ENCODE measurements at regions of chr6 and their contacts with region 1.

Region 1: DNA sequence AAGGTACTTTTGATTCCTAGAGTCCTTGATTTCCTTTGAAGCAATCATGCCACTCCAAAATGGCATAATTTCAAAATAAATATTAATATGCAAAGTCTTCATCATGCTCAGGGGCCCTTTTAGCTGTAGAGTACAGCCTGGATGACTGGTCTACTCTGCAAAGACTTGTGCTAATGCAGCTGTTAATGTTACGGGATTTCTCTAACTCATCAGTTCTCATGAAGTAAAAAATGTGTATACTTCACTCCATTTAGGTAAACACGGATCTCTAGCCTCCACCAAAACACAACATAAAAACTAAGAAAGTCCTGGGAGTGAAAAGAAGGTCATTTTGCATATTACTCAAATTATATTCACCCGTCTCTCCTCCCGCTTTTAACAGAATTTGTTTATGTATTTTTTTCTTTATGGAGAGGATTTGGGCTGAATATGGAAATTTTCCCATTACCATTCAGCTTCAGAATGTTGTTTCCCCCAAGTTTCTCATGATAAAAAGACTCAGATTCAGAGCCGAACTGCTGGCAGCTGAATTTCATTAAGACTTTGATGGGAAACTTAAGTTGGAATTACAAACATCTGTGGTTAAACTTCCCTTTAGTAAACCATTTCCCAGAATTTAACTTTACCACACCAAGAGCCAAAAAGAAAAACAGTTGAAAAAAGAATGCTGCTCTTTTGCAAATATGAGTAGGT is 8.7 kb downstream of the LAMA4 start:
- DNase-seq: no peak
- ATAC-seq: no peak
- H3K4me3 Mint-ChIP-seq: no peak overlapping the region
- H3K27ac Mint-ChIP-seq: no peak overlapping the region
- H3K4me1 Mint-ChIP-seq: no peaks in the 10 kb centered on the region
- H3K27me3 Mint-ChIP-seq: peaks cover 11% of the 10 kb centered on the region
- CTCF ChIP-seq: no peak

Region 2: GRCh38 chr6:112198582-112198981 is 47.1 kb before region 1 on chr6:
- CTCF ChIA-PET with region 1: no interaction called
- POLR2A ChIA-PET with region 1: no interaction called
- intact Hi-C with region 1: loop called (anchors 1 kb)
- DNase-seq: no peak
- ATAC-seq: no peak
- H3K4me3 Mint-ChIP-seq: no peak overlapping the region
- H3K27ac Mint-ChIP-seq: no peak overlapping the region
- H3K4me1 Mint-ChIP-seq: no peaks in the 10 kb centered on the region
- H3K27me3 Mint-ChIP-seq: peaks cover 10% of the 10 kb centered on the region
- CTCF ChIP-seq: no peak

Measured in activated B cell treated with CpG ODN at 0.5 μM for 24 hours (primary cell).